ENCODE measurements at regions of chr2 and their contacts with region 1.

Region 1: GRCh38 chr2:219736209-219736608 is 108.8 kb downstream of the SLC4A3 start:
- DNase-seq: peak; percentile 31 to 56
- H3K4me3 ChIP-seq: no peak overlapping the region
- H3K27ac ChIP-seq: no peak overlapping the region
- H3K4me1 ChIP-seq: no peaks in the 10 kb centered on the region
- H3K27me3 ChIP-seq: no peaks in the 10 kb centered on the region
- CTCF ChIP-seq: peak; percentile 73

Region 2: GRCh38 chr2:219057709-219058540 is 678.3 kb before region 1 on chr2:
- CTCF ChIA-PET with region 1: no interaction called
- POLR2A ChIA-PET with region 1: no interaction called
- intact Hi-C with region 1: no loop called
- DNase-seq: peak in 1 of 2 experiments; percentile 69
- H3K4me3 ChIP-seq: no peak overlapping the region
- H3K27ac ChIP-seq: no peak overlapping the region
- H3K4me1 ChIP-seq: no peaks in the 10 kb centered on the region
- H3K27me3 ChIP-seq: peaks cover 70% of the 10 kb centered on the region
- CTCF ChIP-seq: peak; percentile 80

Region 3: GRCh38 chr2:219968685-219969345 is 232.6 kb after region 1 on chr2:
- CTCF ChIA-PET with region 1: no interaction called
- POLR2A ChIA-PET with region 1: no interaction called
- intact Hi-C with region 1: loop called (anchors 1 kb)
- DNase-seq: peak; percentile 86 to 89
- H3K4me3 ChIP-seq: no peak overlapping the region
- H3K27ac ChIP-seq: peak overlapping the region; percentile 86
- H3K4me1 ChIP-seq: peaks cover 35% of the 10 kb centered on the region
- H3K27me3 ChIP-seq: no peaks in the 10 kb centered on the region
- CTCF ChIP-seq: no peak

Region 4: GRCh38 chr2:220664272-220665107 is 928.3 kb after region 1 on chr2:
- CTCF ChIA-PET with region 1: no interaction called
- POLR2A ChIA-PET with region 1: no interaction called
- intact Hi-C with region 1: loop called (anchors 10 kb)
- DNase-seq: no peak
- H3K4me3 ChIP-seq: no peak overlapping the region
- H3K27ac ChIP-seq: no peak overlapping the region
- H3K4me1 ChIP-seq: peaks cover 25% of the 10 kb centered on the region
- H3K27me3 ChIP-seq: no peaks in the 10 kb centered on the region
- CTCF ChIP-seq: no peak